ENCODE measurements at regions of chr19 and their contacts with region 1.

Region 1: GRCh38 chr19:44164673-44165512 is at the start of gene ZNF226:
- H3K4me3 ChIP-seq: peak within 1 kb of the TSS; percentile 57
- H3K27ac ChIP-seq: peak within 1 kb of the TSS; percentile 73
- H3K4me1 ChIP-seq: peaks cover 32% of the 10 kb centered on the region
- CTCF ChIP-seq: no peak

Region 2: GRCh38 chr19:43934985-43935708 is 229.7 kb before region 1 on chr19 and contains the start of gene ZNF45:
- CTCF ChIA-PET with region 1: no interaction called
- POLR2A ChIA-PET with region 1: interaction called, 20 read pairs
- H3K4me3 ChIP-seq: peak within 1 kb of the TSS; percentile 74
- H3K27ac ChIP-seq: peak within 1 kb of the TSS; percentile 78
- H3K4me1 ChIP-seq: peaks cover 18% of the 10 kb centered on the region
- CTCF ChIP-seq: peak; percentile 58; the same call in 1 of the 2 replicates

Region 3: GRCh38 chr19:44093931-44094765 is 70.7 kb before region 1 on chr19 and contains the start of gene ZNF224:
- CTCF ChIA-PET with region 1: interaction called, 6 read pairs
- POLR2A ChIA-PET with region 1: interaction called, 21 read pairs
- H3K4me3 ChIP-seq: peak within 1 kb of the TSS; percentile 61
- H3K27ac ChIP-seq: peak within 1 kb of the TSS; percentile 92
- H3K4me1 ChIP-seq: peaks cover 19% of the 10 kb centered on the region; the same call in 1 of the 2 replicates
- CTCF ChIP-seq: no peak; the same call in 1 of the 2 replicates

Region 4: DNA sequence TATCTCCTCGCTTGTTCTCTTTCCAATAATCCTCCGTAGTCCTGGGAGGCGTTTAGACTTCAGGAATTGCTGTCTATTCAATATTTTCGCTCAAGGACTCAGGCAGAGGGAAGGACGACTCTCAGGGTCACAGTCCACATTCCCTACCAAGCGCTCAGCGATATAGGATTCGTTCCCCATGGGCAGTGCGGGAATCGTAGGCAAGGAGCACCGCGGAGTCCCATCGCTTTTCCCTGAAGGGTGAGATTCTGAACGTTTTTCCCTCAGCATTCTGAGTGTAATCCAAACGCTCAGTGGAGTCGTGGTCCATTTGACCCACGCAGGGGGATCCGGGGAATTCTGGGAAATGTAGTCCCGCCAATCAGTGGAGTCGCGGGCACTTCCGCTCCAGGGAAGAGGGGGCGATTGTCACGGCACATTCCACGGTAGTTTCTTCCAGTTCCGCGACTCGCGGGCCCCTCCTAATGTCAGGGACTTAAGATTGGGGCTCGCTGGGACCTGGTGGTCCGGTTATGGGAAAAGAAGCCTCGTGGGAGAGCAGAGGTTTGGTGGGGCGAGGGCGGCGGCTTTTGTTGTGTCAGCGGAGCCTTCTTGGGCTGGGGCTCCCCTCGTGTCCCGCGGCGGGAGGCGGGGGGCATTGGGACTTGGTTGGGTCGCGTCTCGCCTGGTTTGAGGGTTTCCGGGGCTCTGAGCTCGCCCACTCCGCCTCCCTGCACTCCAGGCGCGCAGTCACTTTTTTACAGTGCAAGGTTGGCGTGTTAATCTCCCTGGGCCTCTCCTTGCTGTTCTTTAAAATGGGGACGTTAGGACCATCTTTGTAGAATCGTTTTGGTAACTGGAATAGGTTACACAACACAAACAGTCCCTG is 23.5 kb before region 1 on chr19 and contains the start of gene ZNF234:
- CTCF ChIA-PET with region 1: interaction called, 4 read pairs
- POLR2A ChIA-PET with region 1: interaction called, 14 read pairs
- H3K4me3 ChIP-seq: peak within 1 kb of the TSS; percentile 56
- H3K27ac ChIP-seq: peak within 1 kb of the TSS; percentile 71
- H3K4me1 ChIP-seq: peaks cover 19% of the 10 kb centered on the region
- CTCF ChIP-seq: peak; percentile 80

Region 5: DNA sequence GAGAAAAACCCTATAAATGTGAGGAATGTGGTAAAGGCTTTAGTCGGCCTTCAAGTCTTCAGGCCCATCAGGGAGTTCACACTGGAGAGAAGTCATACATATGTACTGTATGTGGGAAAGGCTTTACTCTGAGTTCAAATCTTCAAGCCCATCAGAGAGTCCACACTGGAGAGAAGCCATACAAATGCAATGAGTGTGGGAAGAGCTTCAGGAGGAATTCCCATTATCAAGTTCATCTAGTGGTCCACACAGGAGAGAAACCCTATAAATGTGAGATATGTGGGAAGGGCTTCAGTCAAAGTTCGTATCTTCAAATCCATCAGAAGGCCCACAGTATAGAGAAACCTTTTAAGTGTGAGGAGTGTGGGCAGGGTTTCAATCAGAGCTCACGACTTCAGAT is 11.7 kb after region 1 on chr19:
- CTCF ChIA-PET with region 1: no interaction called
- POLR2A ChIA-PET with region 1: interaction called, 11 read pairs
- H3K4me3 ChIP-seq: no peak overlapping the region
- H3K27ac ChIP-seq: no peak overlapping the region
- H3K4me1 ChIP-seq: peaks cover 6% of the 10 kb centered on the region; the same call in 1 of the 2 replicates
- CTCF ChIP-seq: no peak

Region 6: DNA sequence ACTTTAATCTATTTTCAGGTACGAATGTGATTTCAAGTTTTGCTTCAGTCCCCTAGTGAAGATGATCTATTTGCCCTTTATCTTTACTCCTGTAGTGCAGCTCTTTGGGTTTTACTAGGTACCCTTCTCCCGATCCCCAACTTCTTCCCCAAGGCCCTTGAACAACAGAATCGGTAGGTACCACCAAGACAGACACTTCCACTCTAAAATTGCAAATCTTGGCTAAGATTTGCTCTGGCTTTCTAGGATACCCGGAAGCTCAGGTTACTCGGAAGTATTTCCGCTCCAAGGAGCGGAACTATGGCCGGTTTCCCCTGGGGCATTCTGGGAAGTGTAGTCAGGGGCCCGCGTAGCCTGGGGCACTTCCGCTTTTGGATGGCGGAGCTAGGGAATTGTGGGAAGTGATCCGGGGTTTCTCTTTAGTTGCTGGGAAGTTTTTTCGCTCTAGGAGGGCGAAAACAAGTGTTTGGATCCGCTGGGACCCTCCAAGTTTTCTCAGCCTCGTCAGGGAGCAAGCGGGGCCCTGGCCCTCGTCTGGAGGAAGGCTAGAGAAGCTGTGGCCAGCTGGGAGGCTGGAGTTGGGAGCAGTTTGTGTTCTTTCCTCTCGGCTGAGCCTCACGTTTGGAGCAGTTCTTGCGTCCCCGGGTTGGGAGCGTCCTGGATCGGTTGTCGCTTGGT is 42.4 kb after region 1 on chr19:
- CTCF ChIA-PET with region 1: interaction called, 4 read pairs
- POLR2A ChIA-PET with region 1: interaction called, 143 read pairs
- H3K4me3 ChIP-seq: peak overlapping the region; percentile 44
- H3K27ac ChIP-seq: peak overlapping the region; percentile 98
- H3K4me1 ChIP-seq: peaks cover 30% of the 10 kb centered on the region
- CTCF ChIP-seq: no peak

Region 7: DNA sequence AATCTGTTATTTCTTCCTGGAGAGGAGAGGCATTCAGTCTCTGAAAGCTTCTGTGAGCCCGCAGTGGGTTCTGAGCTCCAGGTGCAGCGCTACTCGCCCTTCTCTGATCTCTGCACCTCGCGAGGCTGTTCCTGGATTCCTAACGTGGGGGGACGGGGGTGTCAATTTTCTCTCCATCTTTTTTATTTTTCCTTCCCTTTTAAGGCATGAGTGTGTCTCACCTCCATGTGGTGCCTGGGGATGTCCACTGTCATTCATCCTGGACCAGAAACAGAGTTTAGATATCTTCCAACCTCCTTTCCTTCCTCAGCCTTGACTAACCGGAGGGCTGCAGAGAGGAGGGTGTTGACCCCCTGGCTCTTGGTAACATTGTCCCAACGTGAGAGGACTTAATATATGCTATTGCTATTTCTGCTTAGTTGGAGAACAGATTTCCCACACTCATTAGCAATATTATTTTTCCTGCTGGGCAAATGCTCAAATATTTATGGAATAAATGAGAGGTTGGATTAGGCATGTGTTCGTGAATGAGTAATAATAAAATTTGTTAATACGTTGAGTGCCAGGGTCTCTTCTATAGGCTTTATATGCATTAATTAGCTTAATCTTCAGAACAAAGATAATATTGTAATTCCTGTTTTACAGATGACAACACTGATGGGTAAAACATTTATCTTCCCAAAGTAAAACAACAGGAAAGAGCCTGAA is 95.6 kb after region 1 on chr19:
- CTCF ChIA-PET with region 1: no interaction called
- POLR2A ChIA-PET with region 1: interaction called, 21 read pairs
- H3K4me3 ChIP-seq: no peak overlapping the region
- H3K27ac ChIP-seq: peak overlapping the region; percentile 91
- H3K4me1 ChIP-seq: peaks cover 25% of the 10 kb centered on the region
- CTCF ChIP-seq: peak; percentile 46